Ascending aorta (tissue), 2 donors: ENCODE measurements at regions of chr16 and their contacts with region 1.

Region 1: DNA sequence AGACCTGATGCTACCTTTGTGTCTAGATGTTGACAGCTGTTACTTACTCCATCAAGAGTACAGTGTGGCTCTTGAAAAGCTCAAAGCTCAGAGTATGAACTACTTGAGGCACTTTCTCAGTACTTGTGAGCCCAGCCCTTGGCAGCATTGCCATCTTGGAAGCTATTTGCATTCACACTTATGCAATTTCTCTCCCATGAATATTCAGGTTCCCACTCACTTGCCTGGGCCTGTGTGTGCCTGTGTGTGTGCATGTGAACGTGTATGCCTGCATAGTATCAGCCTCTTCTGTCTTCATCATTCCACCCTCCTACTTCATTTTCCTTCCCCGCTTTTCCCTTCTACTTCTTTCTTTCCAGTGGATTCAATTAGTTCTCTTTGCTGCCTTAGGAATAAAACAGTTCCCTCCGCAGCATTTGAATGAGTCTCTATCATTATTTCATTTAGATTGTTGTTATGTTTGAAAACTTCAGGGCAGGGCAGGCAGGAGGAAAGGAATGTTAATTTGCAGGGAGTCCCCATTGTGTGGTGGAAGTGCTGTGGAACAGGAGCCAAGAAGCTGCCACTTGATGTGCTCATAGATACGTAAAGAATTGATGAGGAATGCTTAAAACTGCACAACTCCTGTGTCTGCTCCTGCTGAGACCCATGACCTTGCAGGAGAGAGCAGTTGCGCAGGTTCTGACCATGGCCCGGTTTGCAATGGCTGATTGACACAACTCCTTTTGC is 58.9 kb downstream of the HS3ST4 start:
- DNase-seq: no peak
- H3K4me3 ChIP-seq: no peak overlapping the region
- H3K27ac ChIP-seq: no peak overlapping the region
- H3K4me1 ChIP-seq: no peaks in the 10 kb centered on the region
- H3K27me3 ChIP-seq: no peaks in the 10 kb centered on the region
- CTCF ChIP-seq: no peak

Region 2: DNA sequence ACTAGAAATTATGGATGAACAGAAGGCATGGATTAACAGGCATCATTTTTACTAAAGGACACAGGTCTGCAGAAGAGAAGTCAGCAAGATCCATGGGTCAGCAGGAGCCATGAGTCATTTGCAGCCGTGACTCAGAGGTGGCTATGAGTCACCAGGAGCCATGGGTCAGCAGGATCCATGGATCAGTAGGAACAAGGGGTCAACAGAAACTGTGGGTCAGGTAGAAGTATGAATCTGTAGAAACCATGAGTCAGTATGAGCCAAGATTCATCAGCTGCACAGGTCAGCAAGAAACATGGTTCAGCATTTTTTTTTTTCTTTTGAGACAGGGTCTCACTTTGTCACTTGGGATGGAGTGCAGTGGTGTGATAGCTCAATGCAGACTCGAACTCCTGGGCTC is 117.1 kb before region 1 on chr16:
- intact Hi-C with region 1: no loop called
- DNase-seq: no peak
- H3K4me3 ChIP-seq: no peak overlapping the region
- H3K27ac ChIP-seq: no peak overlapping the region
- H3K4me1 ChIP-seq: no peaks in the 10 kb centered on the region
- H3K27me3 ChIP-seq: no peaks in the 10 kb centered on the region
- CTCF ChIP-seq: no peak

Region 3: DNA sequence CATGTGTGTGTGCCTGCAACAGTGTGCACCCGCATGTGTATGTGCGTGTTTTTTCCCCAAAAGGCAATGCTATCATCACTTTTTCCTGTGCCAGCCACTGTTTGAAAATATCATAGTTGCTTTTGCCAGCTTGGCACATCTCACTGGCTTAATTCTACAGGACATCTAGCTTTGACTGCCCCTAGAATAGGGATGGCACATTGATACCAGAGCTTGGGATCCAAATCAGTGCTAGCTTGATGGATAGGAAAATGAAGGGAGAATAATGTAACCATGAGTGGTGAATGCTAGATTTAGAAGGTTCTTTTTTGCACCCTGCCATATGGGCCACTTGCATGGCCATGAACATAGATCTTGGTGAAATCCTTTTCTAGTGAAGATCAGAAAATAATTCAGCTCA is 13.8 kb after region 1 on chr16:
- intact Hi-C with region 1: loop called (anchors 1 kb)
- DNase-seq: no peak
- H3K4me3 ChIP-seq: no peak overlapping the region
- H3K27ac ChIP-seq: no peak overlapping the region
- H3K4me1 ChIP-seq: no peaks in the 10 kb centered on the region
- H3K27me3 ChIP-seq: no peaks in the 10 kb centered on the region
- CTCF ChIP-seq: no peak